ENCODE measurements at regions of chr17 and their contacts with region 1.

Region 1: GRCh38 chr17:28951991-28952975 is 965 bp upstream of the PHF12 start:
- DNase-seq: peak; percentile 98
- H3K4me3 Mint-ChIP-seq: no peak overlapping the region
- H3K27ac Mint-ChIP-seq: no peak overlapping the region
- H3K4me1 Mint-ChIP-seq: peaks cover 16% of the 10 kb centered on the region
- H3K27me3 Mint-ChIP-seq: no peaks in the 10 kb centered on the region

Region 2: GRCh38 chr17:28644985-28645939 is 307.0 kb before region 1 on chr17 and contains the start of gene BLTP2:
- CTCF ChIA-PET with region 1: interaction called, 4 read pairs
- POLR2A ChIA-PET with region 1: no interaction called
- intact Hi-C with region 1: loop called (anchors 2 kb)
- DNase-seq: peak; percentile 97
- H3K4me3 Mint-ChIP-seq: peak within 1 kb of the TSS; percentile 83
- H3K27ac Mint-ChIP-seq: peak within 1 kb of the TSS; percentile 86
- H3K4me1 Mint-ChIP-seq: peaks cover 39% of the 10 kb centered on the region
- H3K27me3 Mint-ChIP-seq: no peaks in the 10 kb centered on the region
- total RNA-seq, gene BLTP2: 127 to 133 TPM

Region 3: DNA sequence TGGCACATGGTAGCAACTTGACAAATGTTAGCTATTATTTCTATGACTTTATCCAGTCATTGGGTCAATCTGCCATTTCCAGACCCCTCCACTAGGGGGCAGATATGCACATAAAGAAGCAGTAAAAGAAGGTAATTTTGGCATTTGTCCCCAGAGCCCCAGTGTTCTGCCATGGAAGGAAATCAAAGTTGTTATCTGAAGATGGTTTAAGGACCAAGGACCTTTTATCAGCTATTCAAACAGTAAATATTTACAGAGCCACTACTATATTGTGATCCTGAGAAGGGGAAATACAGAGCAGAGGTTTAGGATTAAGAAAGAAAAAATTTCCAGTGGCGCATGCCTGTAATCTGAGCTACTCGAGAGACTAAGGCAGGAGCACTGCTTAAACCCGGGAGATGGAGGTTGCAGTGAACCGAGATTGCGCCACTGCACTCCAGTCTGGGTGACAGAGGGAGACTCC is 188.4 kb before region 1 on chr17:
- CTCF ChIA-PET with region 1: interaction called, 16 read pairs
- POLR2A ChIA-PET with region 1: no interaction called
- intact Hi-C with region 1: no loop called
- DNase-seq: peak; percentile 84
- H3K4me3 Mint-ChIP-seq: no peak overlapping the region
- H3K27ac Mint-ChIP-seq: peak overlapping the region; percentile 73
- H3K4me1 Mint-ChIP-seq: peaks cover 23% of the 10 kb centered on the region
- H3K27me3 Mint-ChIP-seq: no peaks in the 10 kb centered on the region

Region 4: GRCh38 chr17:28854457-28855350 is 97.6 kb before region 1 on chr17 and contains the start of gene ERAL1:
- CTCF ChIA-PET with region 1: interaction called, 14 read pairs
- POLR2A ChIA-PET with region 1: no interaction called
- intact Hi-C with region 1: loop called (anchors 2 kb)
- DNase-seq: peak; percentile 92
- H3K4me3 Mint-ChIP-seq: peak within 1 kb of the TSS; percentile 81
- H3K27ac Mint-ChIP-seq: peak within 1 kb of the TSS; percentile 86
- H3K4me1 Mint-ChIP-seq: peaks cover 23% of the 10 kb centered on the region
- H3K27me3 Mint-ChIP-seq: no peaks in the 10 kb centered on the region
- total RNA-seq, gene ERAL1: 43.0 to 48.5 TPM

Region 5: DNA sequence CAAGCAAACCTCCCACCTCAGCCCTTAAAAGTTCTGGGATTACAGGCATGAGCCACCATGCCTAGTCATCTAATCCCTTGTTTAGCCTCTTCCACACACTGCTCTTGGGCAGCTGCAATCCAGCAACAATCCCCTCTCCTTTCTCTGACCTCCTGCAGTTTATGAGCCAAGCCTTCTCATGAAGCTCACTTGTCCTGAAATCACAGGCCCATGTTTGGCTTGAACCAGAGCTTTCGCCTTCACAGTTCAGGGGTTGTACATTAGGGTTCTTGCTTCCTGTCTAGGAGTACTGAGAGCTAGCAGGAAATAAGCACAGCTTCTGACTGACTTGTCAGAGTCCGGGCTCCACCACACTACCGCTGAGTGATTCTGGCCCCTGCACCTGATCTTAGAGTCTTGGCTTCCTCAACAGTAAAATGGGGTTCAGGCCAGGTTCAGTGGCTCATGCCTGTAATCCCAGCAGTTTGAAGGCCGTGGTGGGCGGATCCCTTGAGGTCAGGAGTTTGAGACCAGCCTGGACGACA is 81.2 kb before region 1 on chr17:
- CTCF ChIA-PET with region 1: no interaction called
- POLR2A ChIA-PET with region 1: no interaction called
- intact Hi-C with region 1: no loop called
- DNase-seq: peak; percentile 79
- H3K4me3 Mint-ChIP-seq: no peak overlapping the region
- H3K27ac Mint-ChIP-seq: peak overlapping the region; percentile 80
- H3K4me1 Mint-ChIP-seq: peaks cover 19% of the 10 kb centered on the region
- H3K27me3 Mint-ChIP-seq: no peaks in the 10 kb centered on the region

Region 6: GRCh38 chr17:28925912-28926365 is 26.3 kb before region 1 on chr17:
- CTCF ChIA-PET with region 1: interaction called, 6 read pairs
- POLR2A ChIA-PET with region 1: interaction called, 9 read pairs
- intact Hi-C with region 1: loop called (anchors 1 kb)
- DNase-seq: peak; percentile 53
- H3K4me3 Mint-ChIP-seq: peak overlapping the region; percentile 50
- H3K27ac Mint-ChIP-seq: peak overlapping the region; percentile 87
- H3K4me1 Mint-ChIP-seq: peaks cover 59% of the 10 kb centered on the region
- H3K27me3 Mint-ChIP-seq: no peaks in the 10 kb centered on the region

Region 7: DNA sequence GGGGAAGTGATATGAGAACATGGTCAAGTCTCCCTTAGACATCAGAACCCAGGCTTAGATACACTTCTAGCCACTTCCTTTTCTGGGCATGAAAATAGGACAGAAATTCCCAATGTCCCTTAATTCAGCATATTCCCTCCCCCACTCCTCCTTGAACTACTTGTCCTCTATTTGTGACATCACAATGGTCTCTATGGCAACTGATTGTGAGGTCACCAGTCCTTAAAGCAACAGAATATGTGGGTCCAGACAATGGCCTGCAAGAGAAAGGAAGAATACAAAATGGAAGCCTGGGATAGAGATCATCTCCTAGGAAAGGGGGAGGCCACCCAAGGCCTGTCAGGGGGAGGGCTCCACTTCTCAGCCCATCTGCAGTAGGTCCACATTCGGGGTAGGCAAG is 60.3 kb after region 1 on chr17:
- CTCF ChIA-PET with region 1: no interaction called
- POLR2A ChIA-PET with region 1: no interaction called
- intact Hi-C with region 1: no loop called
- DNase-seq: no peak
- H3K4me3 Mint-ChIP-seq: no peak overlapping the region
- H3K27ac Mint-ChIP-seq: no peak overlapping the region
- H3K4me1 Mint-ChIP-seq: peaks cover 3% of the 10 kb centered on the region
- H3K27me3 Mint-ChIP-seq: peaks cover 21% of the 10 kb centered on the region

Region 8: DNA sequence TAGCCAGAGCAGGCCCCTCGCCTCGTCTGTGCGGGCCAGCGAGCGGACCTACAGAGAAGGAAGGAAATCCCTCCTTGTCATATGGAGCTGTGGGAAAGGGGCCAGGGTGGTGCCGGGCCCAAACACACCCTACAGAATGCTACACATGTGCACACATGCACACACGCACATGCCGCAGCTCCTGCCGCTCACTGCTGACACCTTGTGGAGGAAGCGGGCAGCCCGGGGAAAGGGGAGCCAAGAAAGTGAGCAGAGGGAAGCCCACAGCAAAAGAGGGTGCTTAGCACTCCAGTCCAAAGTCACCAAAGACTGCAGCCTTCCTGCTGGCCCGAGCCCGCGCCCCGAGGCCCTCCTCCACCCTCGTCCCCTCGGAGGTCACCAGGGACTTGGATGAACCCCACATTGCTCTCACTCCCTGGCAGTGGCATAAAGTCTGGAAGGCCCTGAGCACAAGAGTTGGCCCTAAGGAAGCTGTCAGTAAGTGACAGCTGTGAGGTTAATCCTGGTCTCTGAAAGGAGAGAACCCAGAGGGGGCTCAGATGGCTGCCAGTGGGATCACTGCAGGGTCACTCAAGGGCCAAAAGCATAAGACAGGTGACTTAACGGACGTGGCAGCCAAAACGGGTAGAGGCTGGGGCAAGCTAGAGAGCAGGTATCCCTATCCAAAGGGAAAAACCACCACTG is 159.7 kb after region 1 on chr17:
- CTCF ChIA-PET with region 1: interaction called, 36 read pairs
- POLR2A ChIA-PET with region 1: no interaction called
- intact Hi-C with region 1: loop called (anchors 5 kb)
- DNase-seq: peak; percentile 80
- H3K4me3 Mint-ChIP-seq: no peak overlapping the region
- H3K27ac Mint-ChIP-seq: no peak overlapping the region
- H3K4me1 Mint-ChIP-seq: peaks cover 2% of the 10 kb centered on the region
- H3K27me3 Mint-ChIP-seq: no peaks in the 10 kb centered on the region

Region 9: GRCh38 chr17:29293890-29294579 is 341.8 kb after region 1 on chr17 and contains the start of gene NUFIP2:
- CTCF ChIA-PET with region 1: no interaction called
- POLR2A ChIA-PET with region 1: interaction called, 3 read pairs
- intact Hi-C with region 1: loop called (anchors 1 kb)
- DNase-seq: peak; percentile 99
- H3K4me3 Mint-ChIP-seq: peak within 1 kb of the TSS; percentile 99
- H3K27ac Mint-ChIP-seq: peak within 1 kb of the TSS; percentile 96
- H3K4me1 Mint-ChIP-seq: peaks cover 31% of the 10 kb centered on the region
- H3K27me3 Mint-ChIP-seq: no peaks in the 10 kb centered on the region
- total RNA-seq, gene NUFIP2: 45.6 to 56.9 TPM